Activated T-helper 2 cell treated with anti-CD3 and anti-CD28 coated beads, Interferon-gamma antibody, Interleukin-2, Interleukin-4, amounts not matched to agents 10 μg/mL and 5 μg/mL and 100 μg/mL, durations not matched to agents 14 hours and 24 hours and 36 hours (primary cell): ENCODE measurements at regions of chr22 and their contacts with region 1.

Region 1: DNA sequence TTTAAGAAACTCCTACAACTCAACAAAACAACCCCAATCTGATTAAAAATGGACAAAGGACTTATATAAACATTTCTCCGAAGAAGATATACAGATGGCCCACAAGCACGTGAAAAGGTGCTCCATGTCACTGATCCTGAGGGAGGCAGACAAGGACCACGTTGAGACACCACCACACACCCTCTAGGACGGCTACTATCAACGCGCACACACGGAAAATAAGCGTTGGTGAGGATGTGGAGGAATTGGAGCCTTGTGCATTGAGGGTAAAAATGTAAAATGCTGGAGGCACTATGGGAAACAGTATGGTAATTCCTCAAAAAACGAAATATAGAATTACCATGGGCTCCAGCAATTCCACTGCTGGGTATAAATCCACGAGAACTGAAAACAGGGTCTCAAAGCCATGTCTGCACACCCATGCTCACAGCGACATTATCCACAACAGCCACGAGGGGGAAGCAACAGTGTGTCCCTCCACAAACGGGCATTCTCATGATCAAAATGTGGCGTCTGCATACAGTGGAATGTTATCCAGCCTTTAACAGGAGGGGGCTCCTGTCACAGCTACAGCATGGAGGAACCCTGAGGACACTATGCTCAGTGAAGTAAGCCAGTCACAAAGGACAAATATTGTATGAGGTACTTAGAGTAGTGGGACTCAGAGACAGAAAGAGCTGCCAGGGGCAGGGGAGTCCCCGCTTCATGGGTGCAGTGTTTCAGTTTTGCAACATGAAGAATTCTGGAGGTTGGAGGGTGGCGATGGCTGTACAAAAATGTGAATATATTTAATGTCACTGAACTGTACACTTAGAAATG is 22.5 kb downstream of the YPEL1 start:
- DNase-seq: peak; percentile 33
- H3K4me3 Mint-ChIP-seq: no peak overlapping the region
- H3K27ac Mint-ChIP-seq: no peak overlapping the region
- H3K4me1 Mint-ChIP-seq: peaks cover 3% of the 10 kb centered on the region
- H3K27me3 Mint-ChIP-seq: peaks cover 3% of the 10 kb centered on the region

Region 2: DNA sequence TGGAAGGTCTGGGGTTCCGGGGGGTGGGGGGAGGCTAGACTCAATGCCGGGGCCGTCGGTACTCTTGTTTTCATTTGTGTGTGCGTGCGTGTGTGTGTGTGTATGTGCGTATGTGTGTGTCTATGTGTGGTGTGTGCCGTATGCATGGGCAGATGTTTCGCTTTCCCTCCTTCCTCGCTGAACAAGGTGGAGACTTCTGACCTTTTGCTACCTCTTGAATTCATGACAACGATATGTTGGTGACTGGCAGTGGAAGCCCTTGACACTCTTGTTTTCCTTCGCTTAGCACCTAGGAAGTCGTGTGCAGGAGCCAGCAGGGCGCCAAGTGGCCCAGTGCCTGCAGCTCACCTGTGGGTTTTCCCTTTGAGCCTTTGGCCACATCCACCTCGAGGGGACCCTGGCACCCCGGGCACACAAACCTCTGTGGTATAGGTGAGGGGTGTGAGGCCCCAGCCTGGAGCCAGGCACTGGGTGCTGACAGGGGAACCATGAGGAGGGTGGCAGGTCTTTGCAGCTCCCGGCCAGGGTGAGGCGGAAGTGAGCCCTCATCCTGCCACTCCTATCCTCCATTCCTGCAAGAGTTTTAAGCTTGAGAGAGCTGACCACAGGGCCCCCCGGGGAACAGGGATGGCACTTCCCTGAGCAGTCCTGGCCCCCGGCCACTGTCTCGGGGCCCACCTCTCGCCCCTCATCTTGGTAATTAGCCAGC is 265.3 kb before region 1 on chr22:
- intact Hi-C with region 1: no loop called
- DNase-seq: no peak
- H3K4me3 Mint-ChIP-seq: no peak overlapping the region
- H3K27ac Mint-ChIP-seq: no peak overlapping the region
- H3K4me1 Mint-ChIP-seq: no peaks in the 10 kb centered on the region
- H3K27me3 Mint-ChIP-seq: no peaks in the 10 kb centered on the region

Region 3: DNA sequence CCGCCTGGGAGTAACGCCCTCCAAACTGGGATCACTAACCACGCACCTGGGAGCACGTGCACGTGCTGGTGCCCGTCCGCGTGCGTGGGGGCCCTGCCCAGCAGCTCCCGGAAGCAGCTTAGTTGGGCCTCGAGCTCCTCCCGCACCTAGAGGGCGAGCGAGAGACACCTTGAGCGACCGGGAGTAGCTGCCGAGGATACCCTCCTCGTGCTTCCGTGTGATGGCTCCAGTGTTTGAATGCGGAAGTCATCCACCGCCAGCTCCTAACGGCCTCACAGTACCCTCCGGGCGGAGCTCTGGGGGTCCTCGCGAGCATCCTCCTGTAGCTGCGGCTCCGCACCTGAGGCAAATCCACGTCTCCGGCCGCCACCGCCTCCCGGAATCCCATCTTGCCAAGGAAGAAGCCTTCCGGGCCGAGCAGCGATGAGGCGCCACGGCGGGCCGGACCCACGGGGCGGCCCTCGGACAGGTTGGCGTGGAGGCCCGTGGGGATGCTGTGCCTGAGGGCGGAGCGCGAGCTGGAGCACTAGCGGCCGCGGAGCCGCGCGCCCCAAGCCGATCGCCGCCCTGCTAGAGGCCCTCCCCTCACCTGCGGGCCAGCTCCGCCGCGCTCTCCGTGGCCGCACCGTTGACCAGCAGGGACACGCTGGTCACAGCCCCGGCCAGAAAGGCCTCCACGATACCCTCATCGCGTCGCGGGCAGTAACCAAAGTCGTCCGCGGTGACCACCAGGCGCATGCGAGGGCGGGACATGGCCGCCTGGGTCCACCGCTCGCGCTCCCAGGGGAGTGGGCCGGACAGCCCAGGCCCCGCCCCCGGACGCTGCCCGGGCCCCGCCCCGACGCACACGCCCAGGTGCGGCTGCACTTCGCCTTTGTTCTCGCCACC is 83.6 kb before region 1 on chr22 and contains the start of gene YDJC:
- intact Hi-C with region 1: no loop called
- DNase-seq: peak; percentile 91
- H3K4me3 Mint-ChIP-seq: peak within 1 kb of the TSS; percentile 89
- H3K27ac Mint-ChIP-seq: peak within 1 kb of the TSS; percentile 90
- H3K4me1 Mint-ChIP-seq: peaks cover 36% of the 10 kb centered on the region
- H3K27me3 Mint-ChIP-seq: no peaks in the 10 kb centered on the region
- total RNA-seq, gene YDJC: 44.3 and 49.6 TPM in 2 replicates

Region 4: GRCh38 chr22:21952586-21953571 is 239.8 kb after region 1 on chr22 and contains the start of gene PPM1F:
- intact Hi-C with region 1: loop called (anchors 2 kb)
- DNase-seq: peak; percentile 83
- H3K4me3 Mint-ChIP-seq: peak within 1 kb of the TSS; percentile 83
- H3K27ac Mint-ChIP-seq: peak within 1 kb of the TSS; percentile 65
- H3K4me1 Mint-ChIP-seq: peaks cover 8% of the 10 kb centered on the region
- H3K27me3 Mint-ChIP-seq: no peaks in the 10 kb centered on the region
- total RNA-seq, gene PPM1F: 26.4 and 31.4 TPM in 2 replicates